ENCODE measurements at regions of chr12 and their contacts with region 1.

Region 1: GRCh38 chr12:48454667-48455066 is 17.7 kb upstream of the ANP32D start:
- DNase-seq: peak; percentile 19
- H3K4me3 ChIP-seq: no peak overlapping the region
- H3K27ac ChIP-seq: no peak overlapping the region
- H3K4me1 ChIP-seq: no peaks in the 10 kb centered on the region
- H3K27me3 ChIP-seq: peaks cover 1% of the 10 kb centered on the region
- CTCF ChIP-seq: peak; percentile 38 to 55

Region 2: DNA sequence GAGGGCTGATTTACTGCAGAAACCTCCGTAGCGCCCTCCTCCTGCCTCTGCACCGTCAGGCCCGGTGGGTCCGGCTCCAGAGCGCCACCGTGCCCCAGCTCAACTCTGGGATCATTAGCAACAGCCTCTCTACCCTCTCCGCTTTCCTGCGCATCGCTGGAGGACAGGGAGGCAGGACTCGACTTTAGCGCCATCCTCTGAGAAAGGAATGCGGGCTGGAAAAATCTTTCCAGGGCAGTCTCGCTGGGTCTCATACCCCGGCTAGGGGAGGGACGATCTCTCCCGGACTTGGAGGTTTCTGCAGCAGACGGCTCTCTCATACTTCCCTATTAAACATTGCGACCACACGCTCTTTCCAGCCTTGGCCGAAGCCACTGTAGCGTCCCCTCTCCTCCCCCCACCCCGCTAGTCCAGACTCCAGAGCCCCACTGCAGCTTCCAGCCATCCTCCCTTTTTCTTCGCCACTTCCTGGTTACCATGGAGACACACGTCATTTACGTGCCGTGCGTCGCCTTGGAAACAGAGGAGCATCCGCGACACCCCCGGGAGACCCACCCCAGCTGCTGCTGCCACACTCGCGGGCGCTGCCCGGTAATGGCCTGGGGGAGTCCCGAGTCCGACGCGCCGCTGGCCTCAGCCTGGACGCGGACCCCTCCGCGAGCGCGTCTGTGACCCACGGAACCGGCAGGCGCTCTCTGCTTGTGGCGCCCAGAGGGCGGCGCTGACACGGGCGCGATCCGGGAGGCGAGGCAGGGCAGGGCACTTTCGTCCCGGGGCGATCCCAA is 271.4 kb before region 1 on chr12 and contains the start of gene CCDC184:
- CTCF ChIA-PET with region 1: no interaction called
- dilution Hi-C with region 1: no loop called
- in situ Hi-C with region 1: no loop called
- intact Hi-C with region 1: loop called (anchors 2 kb)
- DNase-seq: peak; percentile 71
- H3K4me3 ChIP-seq: peak within 1 kb of the TSS; percentile 64 to 71 (median 67)
- H3K27ac ChIP-seq: no peak within 1 kb of the TSS
- H3K4me1 ChIP-seq: peaks cover 15% of the 10 kb centered on the region
- H3K27me3 ChIP-seq: peaks cover 16% of the 10 kb centered on the region
- CTCF ChIP-seq: peak; percentile 28 to 47
- total RNA-seq, gene CCDC184: 1.5 to 1.7 TPM

Region 3: GRCh38 chr12:48197971-48198671 is 256.5 kb before region 1 on chr12:
- CTCF ChIA-PET with region 1: no interaction called
- dilution Hi-C with region 1: no loop called
- in situ Hi-C with region 1: no loop called
- intact Hi-C with region 1: loop called (anchors 1 kb)
- DNase-seq: peak; percentile 92
- H3K4me3 ChIP-seq: peak overlapping the region; percentile 49 to 70 (median 61)
- H3K27ac ChIP-seq: peak overlapping the region; percentile 74
- H3K4me1 ChIP-seq: peaks cover 15% of the 10 kb centered on the region
- H3K27me3 ChIP-seq: no peaks in the 10 kb centered on the region
- CTCF ChIP-seq: no peak

Region 4: GRCh38 chr12:48512855-48513254 is 58.2 kb after region 1 on chr12:
- CTCF ChIA-PET with region 1: no interaction called
- dilution Hi-C with region 1: no loop called
- in situ Hi-C with region 1: no loop called
- intact Hi-C with region 1: no loop called
- DNase-seq: no peak
- H3K4me3 ChIP-seq: no peak overlapping the region
- H3K27ac ChIP-seq: no peak overlapping the region
- H3K4me1 ChIP-seq: no peaks in the 10 kb centered on the region
- H3K27me3 ChIP-seq: no peaks in the 10 kb centered on the region
- CTCF ChIP-seq: no peak

Region 5: DNA sequence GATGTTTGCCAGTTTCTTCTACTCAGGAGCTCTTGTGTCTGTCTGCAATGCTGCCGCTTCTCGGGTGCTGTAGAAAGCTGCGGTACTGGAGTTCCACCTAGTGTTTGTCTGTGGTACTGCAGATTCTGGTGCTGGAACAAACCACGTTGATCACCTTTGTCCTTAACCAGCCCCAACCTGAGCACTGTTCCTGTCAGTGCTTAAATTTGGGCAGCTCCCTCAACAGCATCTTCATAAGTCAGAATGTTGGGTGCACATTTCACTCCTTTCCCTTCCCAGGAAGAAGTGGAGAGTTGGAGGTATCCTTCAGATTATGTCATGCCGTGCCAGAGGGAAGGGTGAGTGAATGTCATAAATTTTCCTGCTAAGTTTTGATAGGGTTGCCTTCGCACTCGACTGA is 163.9 kb after region 1 on chr12:
- CTCF ChIA-PET with region 1: no interaction called
- dilution Hi-C with region 1: no loop called
- in situ Hi-C with region 1: no loop called
- intact Hi-C with region 1: loop called (anchors 5 kb)
- DNase-seq: peak; percentile 60
- H3K4me3 ChIP-seq: no peak overlapping the region
- H3K27ac ChIP-seq: no peak overlapping the region
- H3K4me1 ChIP-seq: no peaks in the 10 kb centered on the region
- H3K27me3 ChIP-seq: no peaks in the 10 kb centered on the region
- CTCF ChIP-seq: peak; percentile 99 to 100

Measured in mammary epithelial cell (primary cell).